ENCODE measurements at regions of chr16 and their contacts with region 1.

Region 1: GRCh38 chr16:30669896-30670797 is 11.9 kb downstream of the FBRS start:
- DNase-seq: no peak
- H3K4me3 Mint-ChIP-seq: no peak overlapping the region
- H3K27ac Mint-ChIP-seq: no peak overlapping the region
- H3K4me1 Mint-ChIP-seq: no peaks in the 10 kb centered on the region
- H3K27me3 Mint-ChIP-seq: no peaks in the 10 kb centered on the region
- CTCF ChIP-seq: no peak

Region 2: GRCh38 chr16:30657866-30658730 is 12.0 kb before region 1 on chr16 and contains the start of gene FBRS:
- CTCF ChIA-PET with region 1: interaction called, 3 read pairs
- POLR2A ChIA-PET with region 1: interaction called, 13 read pairs
- intact Hi-C with region 1: no loop called
- DNase-seq: peak; percentile 100
- H3K4me3 Mint-ChIP-seq: peak within 1 kb of the TSS; percentile 93
- H3K27ac Mint-ChIP-seq: peak within 1 kb of the TSS; percentile 100
- H3K4me1 Mint-ChIP-seq: peaks cover 21% of the 10 kb centered on the region
- H3K27me3 Mint-ChIP-seq: no peaks in the 10 kb centered on the region
- CTCF ChIP-seq: peak; percentile 57
- total RNA-seq, gene FBRS: 69.1 and 80.8 TPM in 2 replicates

Measured in MCF 10A (cell line).